Transverse colon (tissue), 4 donors: ENCODE measurements at regions of chr16 and their contacts with region 1.

Region 1: DNA sequence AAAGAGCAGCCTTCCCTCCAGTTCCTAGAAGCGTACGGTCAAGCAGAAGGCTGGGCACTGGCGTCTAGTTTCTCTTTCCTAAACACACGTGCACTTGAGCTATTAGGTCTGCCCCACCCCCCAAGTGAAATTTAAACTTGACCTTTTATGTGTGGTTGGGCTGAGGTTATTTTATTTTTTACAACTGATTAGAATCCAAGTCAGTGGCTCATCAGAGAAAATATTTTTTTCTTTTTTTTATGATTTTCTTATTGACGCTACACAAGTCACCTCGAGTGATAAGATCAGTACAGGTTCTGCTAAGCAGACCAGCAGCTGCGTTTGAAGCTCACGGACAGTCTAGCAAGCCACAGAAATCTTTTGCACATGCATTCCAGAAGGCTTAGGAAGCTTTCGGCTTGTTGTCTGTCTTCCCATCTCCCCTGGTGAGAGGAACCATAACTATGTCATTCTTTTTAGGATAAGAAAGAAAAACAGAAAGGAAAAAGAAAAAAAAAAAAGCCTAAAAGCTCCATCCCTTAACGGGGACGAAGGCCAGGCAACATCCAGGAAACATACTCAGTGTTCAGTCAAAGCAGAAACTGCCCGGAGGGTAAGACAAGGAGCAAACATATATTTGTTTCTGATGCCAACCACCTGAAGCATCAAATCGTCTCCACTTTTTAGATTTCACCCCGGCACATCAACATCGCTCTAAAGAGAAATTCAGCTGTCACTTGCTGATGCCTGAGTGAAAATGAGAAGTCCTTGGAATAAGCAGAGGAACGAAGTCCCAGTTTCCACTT is 94.9 kb downstream of the ZFHX3 start:
- DNase-seq: no peak
- H3K4me3 ChIP-seq: no peak overlapping the region
- H3K27ac ChIP-seq: peak overlapping the region in 3 of 4 donors; percentile 7 to 28 (median 26)
- H3K4me1 ChIP-seq: peaks cover 0 to 15% (median 5%) of the 10 kb centered on the region in 4 donors
- H3K27me3 ChIP-seq: no peaks in the 10 kb centered on the region
- CTCF ChIP-seq: no peak
- EP300 ChIP-seq: no peak
- POLR2A ChIP-seq: no peak

Region 2: DNA sequence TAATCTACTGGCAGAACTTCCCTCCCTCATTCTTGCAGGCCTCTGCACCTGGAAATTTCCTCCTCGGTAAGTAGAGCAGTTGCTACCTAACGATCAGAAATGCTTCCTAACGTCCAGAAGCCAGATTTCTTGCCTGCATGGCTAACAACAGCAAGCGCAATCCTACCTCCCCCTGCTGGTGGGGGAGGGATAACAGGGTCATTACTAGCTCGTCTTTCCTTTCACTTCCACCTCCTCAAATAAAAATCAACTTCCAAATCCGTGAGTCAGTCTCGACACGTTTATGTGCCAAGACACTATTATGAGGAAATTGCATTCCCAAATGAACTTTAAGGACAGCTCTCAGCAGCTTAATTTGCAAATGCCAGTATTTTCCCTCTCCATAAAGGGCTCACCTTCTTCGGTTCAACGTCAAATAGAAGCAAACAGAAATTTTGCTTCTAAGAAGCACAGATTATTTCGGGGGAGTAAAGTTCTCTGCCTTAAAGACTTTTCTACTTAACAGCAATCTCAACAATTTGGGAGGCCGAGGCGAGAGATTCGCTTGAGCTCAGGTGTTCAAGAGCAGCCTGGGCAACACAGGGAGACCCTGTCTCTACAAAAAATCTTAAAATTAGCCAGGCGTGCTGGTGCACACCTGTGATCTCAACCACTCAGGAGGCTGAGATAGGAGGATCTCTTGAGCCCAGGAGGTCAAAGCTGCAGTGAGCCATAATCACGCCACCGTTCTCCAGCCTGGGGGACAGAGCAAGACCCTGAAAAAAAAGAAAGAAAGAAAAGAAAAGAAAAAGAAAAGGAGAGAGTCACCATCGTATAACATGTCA is 1155.0 kb after region 1 on chr16:
- in situ Hi-C with region 1: no loop called
- intact Hi-C with region 1: loop called (anchors 10 kb)
- DNase-seq: peak; percentile 63
- H3K4me3 ChIP-seq: peak overlapping the region in 2 of 4 donors; percentile 13 to 30
- H3K27ac ChIP-seq: no peak overlapping the region
- H3K4me1 ChIP-seq: no peaks in the 10 kb centered on the region
- H3K27me3 ChIP-seq: no peaks in the 10 kb centered on the region
- CTCF ChIP-seq: peak; percentile 36 to 58 (median 47)
- EP300 ChIP-seq: no peak
- POLR2A ChIP-seq: no peak